ENCODE measurements at regions of chr18 and their contacts with region 1.

Region 1: GRCh38 chr18:57004366-57005121 is 142.3 kb upstream of the BOD1L2 start:
- DNase-seq: peak in 3 of 14 experiments; percentile 23 to 48 (median 24)
- ATAC-seq: peak; percentile 55
- H3K4me3 ChIP-seq: no peak overlapping the region
- H3K4me3 Mint-ChIP-seq: no peak overlapping the region
- H3K27ac ChIP-seq: no peak overlapping the region
- H3K27ac Mint-ChIP-seq: peak overlapping the region; percentile 34
- H3K4me1 ChIP-seq: no peaks in the 10 kb centered on the region
- H3K4me1 Mint-ChIP-seq: peaks cover 25% of the 10 kb centered on the region
- H3K27me3 ChIP-seq: no peaks in the 10 kb centered on the region
- H3K27me3 Mint-ChIP-seq: no peaks in the 10 kb centered on the region
- CTCF ChIP-seq: no peak

Region 2: GRCh38 chr18:56727399-56727798 is 277.1 kb before region 1 on chr18:
- CTCF ChIA-PET with region 1: no interaction called
- POLR2A ChIA-PET with region 1: no interaction called
- intact Hi-C with region 1: no loop called
- DNase-seq: no peak
- ATAC-seq: no peak
- H3K4me3 ChIP-seq: no peak overlapping the region
- H3K4me3 Mint-ChIP-seq: no peak overlapping the region
- H3K27ac ChIP-seq: no peak overlapping the region
- H3K27ac Mint-ChIP-seq: no peak overlapping the region
- H3K4me1 ChIP-seq: no peaks in the 10 kb centered on the region
- H3K4me1 Mint-ChIP-seq: no peaks in the 10 kb centered on the region
- H3K27me3 ChIP-seq: no peaks in the 10 kb centered on the region
- H3K27me3 Mint-ChIP-seq: no peaks in the 10 kb centered on the region
- CTCF ChIP-seq: no peak

Region 3: DNA sequence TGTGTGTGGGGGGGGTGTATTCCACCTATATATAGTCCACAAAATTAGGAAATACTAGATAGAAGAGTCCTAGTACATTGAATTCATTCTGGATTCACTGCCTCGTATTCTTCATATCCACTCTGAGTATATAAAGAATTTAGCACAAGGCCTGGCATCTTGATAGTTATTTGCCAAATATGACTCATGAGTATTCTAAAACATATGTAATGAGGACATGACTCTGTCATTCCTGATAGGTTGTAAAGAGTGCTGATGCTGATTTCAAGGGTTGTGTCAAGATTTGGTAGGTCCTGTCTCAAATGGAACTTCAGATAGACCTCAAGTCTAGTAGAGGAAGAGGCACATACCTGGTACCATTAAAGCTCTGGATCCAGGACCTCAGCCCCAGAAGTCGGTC is 31.1 kb before region 1 on chr18:
- CTCF ChIA-PET with region 1: no interaction called
- POLR2A ChIA-PET with region 1: no interaction called
- intact Hi-C with region 1: loop called in 1 of 2 experiments (anchors 2 kb)
- DNase-seq: no peak
- ATAC-seq: no peak
- H3K4me3 ChIP-seq: no peak overlapping the region
- H3K4me3 Mint-ChIP-seq: no peak overlapping the region
- H3K27ac ChIP-seq: no peak overlapping the region
- H3K27ac Mint-ChIP-seq: no peak overlapping the region
- H3K4me1 ChIP-seq: no peaks in the 10 kb centered on the region
- H3K4me1 Mint-ChIP-seq: no peaks in the 10 kb centered on the region
- H3K27me3 ChIP-seq: no peaks in the 10 kb centered on the region
- H3K27me3 Mint-ChIP-seq: no peaks in the 10 kb centered on the region
- CTCF ChIP-seq: no peak

Region 4: DNA sequence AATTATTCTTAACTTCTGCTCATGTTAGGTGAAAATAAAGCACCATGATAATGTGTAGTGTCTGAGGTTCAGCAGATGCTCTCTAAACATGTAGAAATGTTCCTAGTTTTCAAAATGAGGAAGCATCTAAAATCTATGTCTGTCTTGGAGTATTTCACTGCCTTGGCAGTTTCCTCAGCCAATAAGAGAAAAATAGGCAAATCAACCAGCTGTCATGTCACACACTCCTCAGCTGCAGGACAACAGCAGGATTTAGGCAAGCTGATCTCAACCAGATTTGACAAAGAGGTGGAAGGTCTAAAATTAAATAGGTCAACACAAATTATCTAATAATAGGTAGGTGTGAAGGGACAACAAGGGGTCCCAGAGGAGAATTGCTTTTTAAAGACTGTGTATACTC is 21.8 kb before region 1 on chr18:
- CTCF ChIA-PET with region 1: no interaction called
- POLR2A ChIA-PET with region 1: no interaction called
- intact Hi-C with region 1: loop called in 1 of 2 experiments (anchors 1 kb)
- DNase-seq: no peak
- ATAC-seq: no peak
- H3K4me3 ChIP-seq: no peak overlapping the region
- H3K4me3 Mint-ChIP-seq: no peak overlapping the region
- H3K27ac ChIP-seq: no peak overlapping the region
- H3K27ac Mint-ChIP-seq: no peak overlapping the region
- H3K4me1 ChIP-seq: no peaks in the 10 kb centered on the region
- H3K4me1 Mint-ChIP-seq: no peaks in the 10 kb centered on the region
- H3K27me3 ChIP-seq: no peaks in the 10 kb centered on the region
- H3K27me3 Mint-ChIP-seq: no peaks in the 10 kb centered on the region
- CTCF ChIP-seq: no peak

Measured in CD4-positive, alpha-beta T cell (primary cell).